Common myeloid progenitor, CD34-positive (primary cell): ENCODE measurements at regions of chr11 and their contacts with region 1.

Region 1: GRCh38 chr11:62922658-62923431 is 1.7 kb upstream of the CHRM1 start:
- DNase-seq: peak in 2 of 3 donors; percentile 38 to 52
- H3K4me3 ChIP-seq: no peak overlapping the region
- H3K27ac ChIP-seq: no peak overlapping the region
- H3K4me1 ChIP-seq: peaks cover 0 to 25% (median 20%) of the 10 kb centered on the region in 4 experiments
- H3K27me3 ChIP-seq: peaks cover 6 to 82% (median 28%) of the 10 kb centered on the region in 5 experiments

Region 2: GRCh38 chr11:63023841-63024648 is 101.2 kb after region 1 on chr11:
- CTCF ChIA-PET with region 1: interaction called, 15 read pairs
- POLR2A ChIA-PET with region 1: no interaction called
- DNase-seq: peak; percentile 77 to 90 (median 87)
- H3K4me3 ChIP-seq: peak overlapping the region in 1 of 7 experiments; percentile 14
- H3K27ac ChIP-seq: no peak overlapping the region
- H3K4me1 ChIP-seq: peaks cover 0 to 7% (median 5%) of the 10 kb centered on the region in 4 experiments
- H3K27me3 ChIP-seq: peaks cover 0 to 7% (median under 1%) of the 10 kb centered on the region in 5 experiments